Common myeloid progenitor, CD34-positive (primary cell): ENCODE measurements at regions of chr16 and their contacts with region 1.

Region 1: DNA sequence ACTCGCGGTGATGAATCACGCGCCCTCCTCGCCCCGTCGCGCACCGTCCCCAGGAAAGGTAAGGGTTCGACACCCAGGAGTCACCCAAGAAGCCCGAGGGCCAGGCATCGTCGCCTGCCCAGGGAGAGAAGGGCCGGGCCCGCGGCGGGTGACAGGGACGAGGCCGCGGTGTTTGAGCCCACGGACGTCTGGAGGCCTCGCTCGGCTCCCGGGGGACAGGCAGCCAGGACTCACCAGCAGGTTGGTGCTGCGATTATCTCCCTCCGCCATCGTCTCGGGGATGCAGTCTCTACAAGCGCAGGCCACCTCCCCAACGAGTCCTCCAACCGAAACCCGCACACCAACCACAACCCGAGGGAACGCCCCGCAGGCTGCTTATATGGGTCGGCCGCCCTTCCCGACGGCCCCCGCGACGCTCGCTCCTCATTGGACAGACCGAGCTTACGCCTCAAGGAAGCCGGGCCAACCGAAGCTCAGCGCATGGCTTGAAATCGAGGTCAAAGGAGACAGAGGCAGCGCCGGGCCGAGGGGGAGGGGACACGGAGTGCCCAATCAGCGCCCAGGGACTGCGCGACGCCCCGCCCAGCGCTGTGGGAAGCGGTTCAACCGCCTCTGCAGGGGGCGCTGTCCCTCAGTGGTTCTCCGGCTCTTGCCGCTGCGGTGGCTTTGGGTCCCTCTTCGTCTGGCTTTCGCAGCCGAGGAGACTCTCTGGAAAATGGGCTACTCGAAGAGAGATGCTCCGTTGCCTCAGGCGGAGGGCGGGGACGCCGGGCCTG is at the start of gene ARL6IP1:
- DNase-seq: peak; percentile 100
- H3K4me3 ChIP-seq: peak within 1 kb of the TSS; percentile 71 to 96 (median 89)
- H3K27ac ChIP-seq: peak within 1 kb of the TSS; percentile 84 to 95
- H3K4me1 ChIP-seq: peaks cover 35 to 64% (median 50%) of the 10 kb centered on the region in 4 experiments
- H3K27me3 ChIP-seq: no peaks in the 10 kb centered on the region

Region 2: DNA sequence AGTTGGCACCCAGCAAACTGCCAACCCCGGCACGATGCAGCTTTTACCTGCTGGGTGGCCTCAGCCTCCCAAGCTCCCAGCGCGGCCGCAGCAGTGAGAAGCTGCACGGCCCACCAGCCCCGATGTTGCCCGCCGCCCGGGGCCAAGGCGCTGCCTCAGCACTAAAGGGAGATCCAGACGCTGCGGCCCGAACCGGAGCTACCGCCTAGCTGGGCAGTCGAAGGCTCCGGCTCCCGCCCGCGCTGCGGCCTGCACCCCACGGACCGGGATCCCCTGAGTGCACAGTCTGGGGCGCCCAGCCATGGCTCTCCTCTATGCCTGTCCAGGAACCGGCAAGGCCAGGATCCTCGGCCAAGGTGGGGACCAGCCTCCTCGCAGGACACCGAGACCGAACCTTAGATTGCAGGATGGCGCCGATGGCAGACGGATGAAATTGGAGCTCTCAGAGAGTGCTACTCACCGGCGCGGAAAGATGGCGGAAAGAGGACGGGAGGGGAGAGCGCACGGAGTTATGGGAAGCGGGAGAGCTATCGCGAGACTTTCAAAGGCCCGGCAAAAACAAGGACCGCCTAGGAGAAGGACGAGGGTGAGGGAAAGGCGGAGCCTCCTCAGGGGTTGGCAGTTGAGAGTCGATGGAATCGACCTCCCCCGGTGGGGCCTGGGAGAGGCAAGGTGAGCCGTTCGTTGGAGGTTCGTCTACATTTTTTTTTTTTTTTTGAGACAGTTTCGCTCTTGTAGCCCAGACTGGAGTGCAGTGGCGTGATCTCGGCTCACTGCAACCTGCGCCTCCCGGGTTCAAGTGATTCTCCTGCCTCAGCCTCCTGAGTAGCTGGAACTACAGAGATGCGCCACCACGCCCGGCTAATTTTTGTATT is 11.3 kb before region 1 on chr16 and contains the start of gene RPS15A:
- CTCF ChIA-PET with region 1: interaction called, 34 read pairs
- POLR2A ChIA-PET with region 1: interaction called, 19 read pairs
- DNase-seq: peak; percentile 98 to 99 (median 99)
- H3K4me3 ChIP-seq: peak within 1 kb of the TSS; percentile 92 to 99 (median 97)
- H3K27ac ChIP-seq: peak within 1 kb of the TSS; percentile 92 to 95
- H3K4me1 ChIP-seq: peaks cover 24 to 38% (median 32%) of the 10 kb centered on the region in 4 experiments
- H3K27me3 ChIP-seq: no peaks in the 10 kb centered on the region

Region 3: GRCh38 chr16:18816286-18816685 is 14.9 kb after region 1 on chr16:
- CTCF ChIA-PET with region 1: interaction called, 56 read pairs
- POLR2A ChIA-PET with region 1: interaction called, 3 read pairs
- DNase-seq: no peak
- H3K4me3 ChIP-seq: no peak overlapping the region
- H3K27ac ChIP-seq: no peak overlapping the region
- H3K4me1 ChIP-seq: peaks cover 0 to 8% (median 4%) of the 10 kb centered on the region in 4 experiments
- H3K27me3 ChIP-seq: no peaks in the 10 kb centered on the region

Region 4: DNA sequence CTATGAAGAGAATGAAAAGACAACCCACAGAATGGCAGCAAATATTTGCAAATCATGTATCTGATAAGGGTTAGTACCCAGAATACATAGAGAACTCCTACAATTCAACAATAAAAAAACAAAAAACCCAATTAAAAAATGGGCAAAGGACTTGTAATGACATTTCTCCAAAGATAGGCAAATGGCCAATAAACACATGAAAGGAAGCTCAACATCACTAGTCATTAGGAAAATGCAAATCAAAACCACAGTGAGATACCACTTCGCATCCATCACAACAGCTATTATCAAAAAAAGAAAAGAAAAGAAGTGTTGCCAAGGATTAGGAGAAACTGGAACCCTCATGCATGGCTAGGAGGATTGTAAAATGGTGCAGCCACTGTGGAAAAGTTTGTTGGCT is 45.0 kb after region 1 on chr16:
- CTCF ChIA-PET with region 1: interaction called, 4 read pairs
- POLR2A ChIA-PET with region 1: interaction called, 10 read pairs
- DNase-seq: no peak
- H3K4me3 ChIP-seq: no peak overlapping the region
- H3K27ac ChIP-seq: no peak overlapping the region
- H3K4me1 ChIP-seq: no peaks in the 10 kb centered on the region
- H3K27me3 ChIP-seq: no peaks in the 10 kb centered on the region

Region 5: DNA sequence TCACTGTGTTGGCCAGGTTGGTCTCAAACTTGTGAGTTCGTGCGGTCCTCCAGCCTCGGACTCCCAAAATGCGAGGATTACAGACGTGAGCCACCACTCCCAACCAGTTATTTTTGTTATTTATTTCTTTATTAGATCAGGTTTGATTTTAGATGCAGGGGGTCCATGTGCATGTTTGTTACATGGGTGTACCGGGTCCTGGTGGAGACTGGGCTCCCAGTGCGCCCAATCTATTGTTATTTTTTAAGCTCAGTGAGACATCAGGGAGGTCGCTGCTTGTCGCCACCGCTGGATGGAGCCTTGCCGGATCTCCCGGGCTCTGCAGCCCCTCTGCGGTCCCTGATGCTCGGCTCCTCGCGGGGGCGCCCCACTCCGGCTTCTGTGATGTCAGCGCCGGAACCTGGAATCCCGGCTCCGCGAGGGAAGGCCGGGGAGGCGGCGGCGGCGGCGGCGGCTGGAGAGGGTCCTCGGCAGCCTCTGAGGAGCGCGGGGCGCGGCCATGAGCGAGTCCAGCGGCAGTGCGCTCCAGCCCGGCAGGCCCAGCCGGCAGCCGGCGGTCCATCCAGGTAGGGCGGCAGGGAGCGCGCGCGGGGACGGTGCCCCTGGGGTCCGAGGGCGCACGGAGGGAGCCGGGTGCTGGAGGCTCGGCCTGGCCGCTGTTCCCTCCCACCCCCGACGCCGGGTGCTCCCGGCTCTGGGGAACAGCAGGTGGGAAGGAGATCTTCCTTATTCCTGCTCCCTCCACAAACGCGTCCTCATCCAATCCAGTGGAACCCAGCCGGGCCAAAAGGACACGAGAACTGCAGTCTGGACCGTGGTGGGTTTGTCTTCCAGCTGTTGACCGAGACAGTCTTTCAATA is 182.4 kb after region 1 on chr16 and contains the start of gene TMC7:
- CTCF ChIA-PET with region 1: no interaction called
- POLR2A ChIA-PET with region 1: no interaction called
- DNase-seq: peak; percentile 58 to 69 (median 61)
- H3K4me3 ChIP-seq: peak within 1 kb of the TSS; percentile 12 to 70 (median 35)
- H3K27ac ChIP-seq: no peak within 1 kb of the TSS
- H3K4me1 ChIP-seq: peaks cover 0 to 9% (median 0%) of the 10 kb centered on the region in 4 experiments
- H3K27me3 ChIP-seq: peaks cover 0 to 19% (median 9%) of the 10 kb centered on the region in 5 experiments